Esophagus muscularis mucosa (tissue), 4 donors: ENCODE measurements at regions of chr2 and their contacts with region 1.

Region 1: DNA sequence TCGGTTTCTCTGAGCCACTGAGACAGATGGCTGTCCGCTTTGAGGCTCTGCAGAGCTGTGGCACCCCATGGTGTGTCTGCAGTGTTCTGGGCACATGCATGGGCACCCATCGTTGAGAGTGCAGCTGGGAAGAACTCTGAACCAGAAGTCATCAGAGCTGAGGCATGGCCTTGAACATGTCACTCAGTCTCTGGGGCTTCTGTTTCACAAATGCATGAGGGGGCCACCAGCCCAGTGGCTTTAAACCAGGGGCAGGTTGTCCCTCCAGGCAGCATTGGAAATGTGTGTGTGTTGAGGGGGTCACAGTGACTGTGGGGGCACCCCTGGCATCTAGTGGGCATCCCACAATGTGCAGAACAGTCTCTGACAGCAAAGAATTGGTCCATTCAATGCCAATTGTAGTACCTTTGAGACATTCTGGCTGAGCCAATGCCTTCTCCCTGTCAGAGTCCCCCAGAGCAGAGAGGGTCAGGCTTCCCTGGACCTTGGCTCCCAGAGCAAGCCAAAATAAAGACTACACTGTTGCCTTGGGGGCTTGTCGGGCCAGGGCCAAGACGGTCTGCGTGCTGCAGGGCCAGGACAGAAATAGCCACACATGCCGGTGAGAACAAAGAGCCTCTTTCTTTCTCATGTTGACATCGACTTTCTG is 9.3 kb upstream of the PSMD1 start:
- DNase-seq: no peak
- H3K4me3 ChIP-seq: no peak overlapping the region
- H3K27ac ChIP-seq: no peak overlapping the region
- H3K4me1 ChIP-seq: peaks cover 2 to 5% (median 4%) of the 10 kb centered on the region in 4 donors
- H3K27me3 ChIP-seq: peaks cover 0 to 28% (median 0%) of the 10 kb centered on the region in 4 donors
- CTCF ChIP-seq: no peak
- EP300 ChIP-seq: no peak
- POLR2A ChIP-seq: no peak

Region 2: DNA sequence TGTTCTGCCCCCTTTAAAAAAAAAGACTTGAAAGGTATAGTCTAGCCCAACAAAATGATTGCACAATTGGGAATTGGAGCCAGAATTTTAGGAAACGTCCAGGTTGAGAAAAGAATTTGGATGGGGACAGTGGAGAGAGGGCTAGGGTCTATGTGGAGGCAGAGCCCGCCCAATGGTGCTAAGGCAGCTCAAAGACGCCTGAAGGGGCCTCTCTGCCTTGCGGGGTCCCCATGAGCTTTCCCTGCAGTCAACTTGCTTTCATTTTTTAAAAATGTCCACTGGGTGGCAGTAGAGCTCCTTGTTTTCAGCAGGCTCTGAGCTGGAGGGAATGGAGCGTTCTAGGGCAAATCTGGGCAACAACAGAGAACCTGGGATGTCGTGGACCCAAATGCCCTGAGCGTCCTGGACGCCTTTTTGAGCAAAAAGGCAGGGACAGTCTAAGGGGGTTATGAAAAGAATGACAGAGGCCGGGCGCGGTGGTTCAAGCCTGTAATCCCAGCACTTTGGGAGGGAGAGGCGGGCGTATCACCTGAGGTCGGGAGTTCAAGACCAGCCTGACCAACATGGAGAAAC is 222.9 kb before region 1 on chr2:
- intact Hi-C with region 1: loop called (anchors 10 kb)
- DNase-seq: no peak
- H3K4me3 ChIP-seq: peak overlapping the region; percentile 29 to 55 (median 34)
- H3K27ac ChIP-seq: no peak overlapping the region
- H3K4me1 ChIP-seq: peaks cover 9 to 21% (median 19%) of the 10 kb centered on the region in 4 donors
- H3K27me3 ChIP-seq: peaks cover 13 to 38% (median 20%) of the 10 kb centered on the region in 4 donors
- CTCF ChIP-seq: peak; percentile 67 to 74 (median 68)
- EP300 ChIP-seq: no peak
- POLR2A ChIP-seq: no peak

Region 3: DNA sequence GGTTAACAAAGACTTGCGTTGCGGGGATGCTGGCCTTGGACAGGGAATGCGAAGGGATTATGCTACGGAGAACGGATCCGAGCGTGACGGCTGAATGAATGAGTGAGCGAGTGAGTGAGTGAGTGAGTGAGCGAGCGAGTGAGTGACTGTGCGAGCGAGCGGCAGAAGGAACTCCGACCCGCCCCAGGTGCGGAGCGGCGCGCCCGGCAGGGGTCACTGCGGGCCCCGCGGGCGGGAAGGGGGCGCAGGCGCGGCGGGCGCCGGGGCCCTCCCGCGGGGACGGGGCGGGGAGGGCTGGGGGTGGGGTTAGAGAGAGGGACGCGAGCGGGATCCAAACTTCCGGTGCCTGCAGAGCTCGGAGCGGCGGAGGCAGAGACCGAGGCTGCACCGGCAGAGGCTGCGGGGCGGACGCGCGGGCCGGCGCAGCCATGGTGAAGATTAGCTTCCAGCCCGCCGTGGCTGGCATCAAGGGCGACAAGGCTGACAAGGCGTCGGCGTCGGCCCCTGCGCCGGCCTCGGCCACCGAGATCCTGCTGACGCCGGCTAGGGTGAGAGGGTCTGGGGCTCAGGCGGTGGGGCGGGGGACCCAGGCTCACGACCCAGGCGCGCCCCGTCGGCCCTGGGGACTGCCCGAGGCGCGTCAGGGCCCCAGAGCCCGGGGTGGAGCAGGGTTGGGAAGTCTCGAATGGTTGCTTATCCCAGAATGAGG is 182.6 kb before region 1 on chr2 and contains the start of gene ITM2C:
- intact Hi-C with region 1: no loop called
- DNase-seq: no peak
- H3K4me3 ChIP-seq: peak within 1 kb of the TSS; percentile 75 to 95 (median 78)
- H3K27ac ChIP-seq: peak within 1 kb of the TSS; percentile 68 to 81 (median 78)
- H3K4me1 ChIP-seq: peaks cover 35 to 57% (median 55%) of the 10 kb centered on the region in 4 donors
- H3K27me3 ChIP-seq: no peaks in the 10 kb centered on the region
- CTCF ChIP-seq: peak; percentile 45 to 53 (median 49)
- EP300 ChIP-seq: no peak
- POLR2A ChIP-seq: no peak
- total RNA-seq, gene ITM2C: 84.0 to 145 (median 101) TPM